HCT116 (cell line): ENCODE measurements at regions of chr5 and their contacts with region 1.

Region 1: GRCh38 chr5:96614110-96614691 is 48.0 kb upstream of the CAST start:
- DNase-seq: peak; percentile 79
- ATAC-seq: peak; percentile 88
- H3K4me3 ChIP-seq: no peak overlapping the region
- H3K27ac ChIP-seq: no peak overlapping the region
- H3K4me1 ChIP-seq: peaks cover 2 to 8% of the 10 kb centered on the region in 2 experiments; a peak in 2 of 4 replicates
- H3K27me3 ChIP-seq: no peaks in the 10 kb centered on the region
- CTCF ChIP-seq: peak; percentile 35 to 88 (median 66); a peak in 5 of 6 replicates
- POLR2A ChIP-seq: no peak
- RAD21 ChIP-seq: peak; percentile 97

Region 2: DNA sequence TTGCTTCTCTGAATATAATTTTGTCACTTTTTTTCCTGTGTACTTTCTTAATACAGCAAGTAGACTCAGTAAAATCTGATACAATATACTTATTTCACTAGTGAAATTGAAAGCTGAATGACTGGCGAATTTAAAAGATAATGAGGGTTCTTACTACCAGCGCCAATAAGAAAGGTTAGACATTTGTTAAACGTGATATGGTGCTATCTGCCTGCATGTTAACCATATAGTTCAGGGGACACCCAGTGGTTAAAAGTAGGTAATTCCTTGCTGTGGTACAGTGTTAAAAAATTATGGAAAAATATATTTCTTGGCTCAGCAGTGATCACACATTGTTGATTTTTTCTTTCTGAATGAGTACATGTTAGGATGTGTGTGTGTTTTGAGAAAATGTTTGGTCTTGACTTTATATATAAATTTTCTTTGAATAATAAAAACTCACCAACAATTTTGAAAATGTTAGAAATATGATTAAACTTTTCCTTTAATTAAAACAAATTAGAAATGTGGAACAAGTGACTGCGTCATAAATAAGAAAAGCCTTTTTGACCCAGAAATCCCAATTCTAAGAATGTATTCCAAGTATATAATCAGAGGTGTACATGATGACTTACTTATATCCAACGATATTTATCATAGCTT is 73.7 kb after region 1 on chr5:
- CTCF ChIA-PET with region 1: interaction called, 30 read pairs
- POLR2A ChIA-PET with region 1: no interaction called
- RAD21 ChIA-PET with region 1: interaction called, 4 to 7 read pairs
- intact Hi-C with region 1: loop called (anchors 1 kb)
- DNase-seq: peak; percentile 39
- ATAC-seq: peak; percentile 93
- H3K4me3 ChIP-seq: 0 out of 4 replicates have a peak overlapping the region, but pooled peaks of 1 of the 2 experiments have one; percentile 9
- H3K27ac ChIP-seq: no peak overlapping the region
- H3K4me1 ChIP-seq: peaks cover 0 to 3% of the 10 kb centered on the region in 2 experiments; a peak in 1 of 4 replicates
- H3K27me3 ChIP-seq: no peaks in the 10 kb centered on the region
- CTCF ChIP-seq: peak; percentile 53 to 74 (median 71); a peak in 5 of 6 replicates
- POLR2A ChIP-seq: no peak
- RAD21 ChIP-seq: peak; percentile 90

Region 3: GRCh38 chr5:96729156-96729555 is 115.0 kb after region 1 on chr5:
- CTCF ChIA-PET with region 1: interaction called, 10 read pairs
- POLR2A ChIA-PET with region 1: no interaction called
- RAD21 ChIA-PET with region 1: interaction called in 1 of 2 experiments, 4 read pairs
- intact Hi-C with region 1: loop called (anchors 1 kb)
- DNase-seq: no peak
- ATAC-seq: no peak
- H3K4me3 ChIP-seq: no peak overlapping the region
- H3K27ac ChIP-seq: no peak overlapping the region
- H3K4me1 ChIP-seq: peaks cover 5 to 13% of the 10 kb centered on the region in 2 experiments; a peak in 3 of 4 replicates
- H3K27me3 ChIP-seq: no peaks in the 10 kb centered on the region
- CTCF ChIP-seq: peak; percentile 17 to 47 (median 28); a peak in 4 of 6 replicates
- POLR2A ChIP-seq: no peak
- RAD21 ChIP-seq: peak; percentile 56

Region 4: GRCh38 chr5:96743065-96743768 is 129.0 kb after region 1 on chr5:
- CTCF ChIA-PET with region 1: interaction called, 12 read pairs
- POLR2A ChIA-PET with region 1: no interaction called
- RAD21 ChIA-PET with region 1: no interaction called
- intact Hi-C with region 1: no loop called
- DNase-seq: no peak
- ATAC-seq: no peak
- H3K4me3 ChIP-seq: no peak overlapping the region
- H3K27ac ChIP-seq: no peak overlapping the region
- H3K4me1 ChIP-seq: peaks cover 0 to 6% of the 10 kb centered on the region in 2 experiments; a peak in 2 of 4 replicates
- H3K27me3 ChIP-seq: no peaks in the 10 kb centered on the region
- CTCF ChIP-seq: no peak
- POLR2A ChIP-seq: no peak
- RAD21 ChIP-seq: no peak

Region 5: GRCh38 chr5:96855031-96855872 is 241.1 kb after region 1 on chr5:
- CTCF ChIA-PET with region 1: no interaction called
- POLR2A ChIA-PET with region 1: no interaction called
- RAD21 ChIA-PET with region 1: no interaction called
- intact Hi-C with region 1: no loop called
- DNase-seq: no peak
- ATAC-seq: no peak
- H3K4me3 ChIP-seq: no peak overlapping the region
- H3K27ac ChIP-seq: no peak overlapping the region
- H3K4me1 ChIP-seq: no peaks in the 10 kb centered on the region
- H3K27me3 ChIP-seq: no peaks in the 10 kb centered on the region
- CTCF ChIP-seq: no peak
- POLR2A ChIP-seq: no peak
- RAD21 ChIP-seq: no peak

Region 6: DNA sequence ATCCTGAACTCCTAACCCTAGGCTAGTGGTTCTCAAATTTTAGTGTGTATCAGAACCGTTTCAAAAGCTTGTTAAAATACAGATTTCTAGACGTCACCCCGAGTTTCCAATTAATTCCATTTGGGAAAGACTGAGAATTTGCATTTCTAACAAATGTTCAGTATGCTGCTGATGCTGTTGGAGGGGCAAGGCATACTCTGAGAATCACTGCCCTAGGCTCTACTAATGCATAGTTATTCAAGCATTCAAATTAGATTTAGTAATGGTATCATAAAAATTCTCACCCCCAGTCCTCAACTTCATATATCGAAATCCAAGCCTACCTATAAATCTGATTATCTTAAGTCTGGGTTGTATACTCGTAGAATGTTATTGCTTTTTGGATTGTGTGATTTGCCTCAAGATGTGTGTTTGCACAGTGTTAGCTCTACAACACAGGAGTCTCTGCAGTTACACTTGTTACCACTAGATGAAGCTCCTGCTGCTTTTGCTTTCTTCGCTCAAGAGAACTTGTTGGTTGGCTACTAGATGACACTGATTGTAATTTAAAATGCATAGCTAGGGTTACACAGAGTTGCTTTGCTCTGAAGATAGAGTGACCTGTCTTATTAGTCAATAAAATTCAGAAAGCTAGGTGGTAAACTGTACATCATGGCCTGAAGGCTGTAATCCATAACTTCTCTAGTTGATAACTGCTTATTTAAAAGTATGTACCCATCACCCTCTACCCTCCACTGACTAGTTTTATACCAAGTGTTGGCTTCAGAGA is 254.6 kb after region 1 on chr5:
- CTCF ChIA-PET with region 1: interaction called, 10 read pairs
- POLR2A ChIA-PET with region 1: no interaction called
- RAD21 ChIA-PET with region 1: no interaction called
- intact Hi-C with region 1: loop called (anchors 2 kb)
- DNase-seq: peak; percentile 57
- ATAC-seq: peak; percentile 97
- H3K4me3 ChIP-seq: no peak overlapping the region
- H3K27ac ChIP-seq: no peak overlapping the region
- H3K4me1 ChIP-seq: no peaks in the 10 kb centered on the region
- H3K27me3 ChIP-seq: no peaks in the 10 kb centered on the region
- CTCF ChIP-seq: peak; percentile 76 to 95 (median 92)
- POLR2A ChIP-seq: no peak
- RAD21 ChIP-seq: peak; percentile 91

Region 7: GRCh38 chr5:97142521-97143254 is 528.5 kb after region 1 on chr5 and contains the start of gene LIX1:
- CTCF ChIA-PET with region 1: interaction called, 11 read pairs
- POLR2A ChIA-PET with region 1: no interaction called
- RAD21 ChIA-PET with region 1: interaction called in 1 of 2 experiments, 4 read pairs
- intact Hi-C with region 1: no loop called
- DNase-seq: no peak
- ATAC-seq: peak; percentile 90
- H3K4me3 ChIP-seq: no peak within 1 kb of the TSS
- H3K27ac ChIP-seq: no peak within 1 kb of the TSS
- H3K4me1 ChIP-seq: no peaks in the 10 kb centered on the region
- H3K27me3 ChIP-seq: no peaks in the 10 kb centered on the region
- CTCF ChIP-seq: peak; percentile 55 to 66 (median 63); a peak in 5 of 6 replicates
- POLR2A ChIP-seq: no peak
- RAD21 ChIP-seq: peak; percentile 81
- total RNA-seq, gene LIX1: not detected

Region 8: GRCh38 chr5:97162045-97162444 is 547.8 kb after region 1 on chr5:
- CTCF ChIA-PET with region 1: interaction called, 12 read pairs
- POLR2A ChIA-PET with region 1: no interaction called
- RAD21 ChIA-PET with region 1: no interaction called
- intact Hi-C with region 1: loop called (anchors 2 kb)
- DNase-seq: peak; percentile 79
- ATAC-seq: peak; percentile 77
- H3K4me3 ChIP-seq: no peak overlapping the region
- H3K27ac ChIP-seq: no peak overlapping the region
- H3K4me1 ChIP-seq: peaks cover 7 to 9% of the 10 kb centered on the region in 2 experiments; a peak in 3 of 4 replicates
- H3K27me3 ChIP-seq: no peaks in the 10 kb centered on the region
- CTCF ChIP-seq: peak; percentile 67 to 95 (median 81)
- POLR2A ChIP-seq: no peak
- RAD21 ChIP-seq: peak; percentile 85

Region 9: DNA sequence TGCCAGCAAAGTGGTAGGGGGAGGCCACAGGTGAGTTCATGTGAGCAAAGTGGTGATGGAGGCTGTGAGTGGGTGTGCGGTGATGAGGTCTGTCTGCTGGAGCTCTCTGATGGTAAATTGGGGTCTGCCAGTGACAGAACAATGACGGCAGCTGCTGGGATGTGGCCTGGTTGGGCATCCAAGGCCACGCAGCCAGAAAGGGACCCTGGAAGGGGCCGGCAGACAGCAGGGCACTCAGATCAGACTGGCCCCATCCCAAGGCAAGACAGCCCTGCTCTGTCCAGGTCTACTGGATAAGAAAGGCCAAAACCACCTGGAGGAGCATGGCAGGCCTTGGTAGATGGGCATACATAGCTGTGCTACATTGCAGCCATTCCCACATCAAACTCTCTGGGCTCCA is 1746.3 kb after region 1 on chr5:
- CTCF ChIA-PET with region 1: no interaction called
- POLR2A ChIA-PET with region 1: no interaction called
- RAD21 ChIA-PET with region 1: no interaction called
- intact Hi-C with region 1: no loop called
- DNase-seq: no peak
- ATAC-seq: no peak
- H3K4me3 ChIP-seq: no peak overlapping the region
- H3K27ac ChIP-seq: no peak overlapping the region
- H3K4me1 ChIP-seq: no peaks in the 10 kb centered on the region
- H3K27me3 ChIP-seq: no peaks in the 10 kb centered on the region
- CTCF ChIP-seq: no peak
- POLR2A ChIP-seq: no peak
- RAD21 ChIP-seq: no peak